ENCODE measurements at regions of chr2 and their contacts with region 1.

Region 1: GRCh38 chr2:239231231-239232194 is 169.3 kb downstream of the HDAC4 start:
- DNase-seq: no peak

Region 2: DNA sequence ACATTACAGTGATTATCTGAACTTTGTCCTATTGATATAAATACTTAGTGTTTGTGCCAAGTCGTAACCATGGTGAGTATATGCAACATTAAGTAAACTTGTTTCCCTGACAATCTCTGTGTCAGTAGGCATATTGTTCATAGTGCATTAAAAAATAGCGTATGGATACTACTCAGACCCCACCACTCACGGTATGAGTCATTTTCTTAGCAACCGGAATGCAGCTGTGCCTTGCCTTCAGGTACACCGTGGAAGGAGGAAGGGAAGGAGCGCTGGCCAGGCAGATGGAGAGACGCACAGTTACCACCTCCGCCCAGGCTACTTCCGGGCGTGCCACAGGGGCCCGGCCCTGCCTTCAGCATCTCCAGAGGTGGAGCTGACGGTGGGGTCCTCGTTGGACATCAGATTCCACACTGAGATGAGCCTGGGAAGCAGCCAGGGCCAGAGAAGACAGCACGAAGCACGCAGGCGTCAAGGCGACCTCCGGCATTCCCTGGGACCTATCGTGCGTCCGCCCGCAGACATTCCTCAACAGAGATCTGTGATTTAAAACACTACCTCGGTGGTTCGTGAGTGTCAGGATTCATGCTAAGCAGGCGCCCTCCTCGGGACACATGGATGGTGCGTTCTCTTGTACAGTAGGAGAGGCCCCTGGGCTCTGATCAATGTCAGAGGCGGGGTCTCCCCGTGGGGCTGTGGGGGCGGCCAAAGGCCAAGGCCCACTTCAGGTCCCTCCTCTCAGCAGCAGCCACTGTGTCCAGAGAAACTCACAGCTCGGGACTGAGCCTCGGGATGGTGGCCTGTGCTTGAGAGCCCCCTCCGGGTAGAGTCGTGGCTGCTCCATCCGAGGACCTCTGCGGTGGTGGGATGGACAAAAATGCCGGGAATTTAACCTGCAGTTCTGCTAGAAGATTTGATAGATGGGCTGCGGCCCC is 251.5 kb after region 1 on chr2:
- intact Hi-C with region 1: loop called in 1 of 2 experiments (anchors 2 kb)
- DNase-seq: no peak